Thyroid gland (tissue), 4 donors: ENCODE measurements at regions of chr1 and their contacts with region 1.

Region 1: GRCh38 chr1:212782422-212783154 is 9.0 kb downstream of the NSL1 start:
- DNase-seq: no peak
- H3K4me3 ChIP-seq: no peak overlapping the region
- H3K27ac ChIP-seq: no peak overlapping the region
- H3K4me1 ChIP-seq: no peaks in the 10 kb centered on the region
- H3K27me3 ChIP-seq: no peaks in the 10 kb centered on the region
- CTCF ChIP-seq: peak in 5 of 6 experiments; percentile 16 to 60 (median 42)
- POLR2A ChIP-seq: no peak

Region 2: GRCh38 chr1:212665241-212666115 is 117.1 kb before region 1 on chr1:
- intact Hi-C with region 1: loop called (anchors 10 kb)
- DNase-seq: peak; percentile 74 to 80
- H3K4me3 ChIP-seq: peak overlapping the region in 2 of 3 donors; percentile 23 to 31
- H3K27ac ChIP-seq: no peak overlapping the region
- H3K4me1 ChIP-seq: peaks cover 0 to 11% of the 10 kb centered on the region in 2 donors
- H3K27me3 ChIP-seq: no peaks in the 10 kb centered on the region
- CTCF ChIP-seq: peak; percentile 76 to 94 (median 88)
- POLR2A ChIP-seq: no peak